IMR-90 (cell line): ENCODE measurements at regions of chr3 and their contacts with region 1.

Region 1: DNA sequence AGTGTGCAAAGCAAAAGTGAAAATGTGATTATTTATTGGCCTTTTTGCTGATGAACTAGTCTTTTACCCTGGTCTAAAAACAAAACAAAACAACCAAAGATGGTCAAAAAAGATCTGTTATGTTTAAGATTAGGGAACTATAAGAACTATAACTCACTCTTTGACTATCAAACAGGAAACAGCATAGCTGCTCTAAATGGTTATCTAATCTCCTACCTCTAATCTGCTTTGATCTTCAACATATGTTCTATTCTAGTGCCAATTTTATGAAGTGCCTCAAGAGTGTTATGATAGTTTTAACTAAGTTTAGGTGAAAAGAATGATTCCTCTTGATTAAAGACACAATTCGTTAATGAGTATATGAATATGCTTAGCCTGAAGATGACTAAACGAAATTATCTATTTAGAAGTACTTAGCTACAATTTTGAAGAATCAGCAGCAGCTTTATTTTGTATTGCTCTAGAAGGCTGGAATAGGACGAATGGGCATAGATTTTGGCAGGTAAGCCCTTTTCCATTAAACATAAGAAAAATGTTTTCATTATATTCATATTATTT is 46.0 kb downstream of the SETD2 start:
- DNase-seq: no peak
- ATAC-seq: no peak
- H3K4me3 ChIP-seq: no peak overlapping the region
- H3K27ac ChIP-seq: no peak overlapping the region
- H3K4me1 ChIP-seq: peaks cover 10% of the 10 kb centered on the region; the same call in 1 of the 2 replicates
- H3K27me3 ChIP-seq: no peaks in the 10 kb centered on the region
- CTCF ChIP-seq: no peak
- POLR2A ChIP-seq: no peak
- RAD21 ChIP-seq: no peak

Region 2: DNA sequence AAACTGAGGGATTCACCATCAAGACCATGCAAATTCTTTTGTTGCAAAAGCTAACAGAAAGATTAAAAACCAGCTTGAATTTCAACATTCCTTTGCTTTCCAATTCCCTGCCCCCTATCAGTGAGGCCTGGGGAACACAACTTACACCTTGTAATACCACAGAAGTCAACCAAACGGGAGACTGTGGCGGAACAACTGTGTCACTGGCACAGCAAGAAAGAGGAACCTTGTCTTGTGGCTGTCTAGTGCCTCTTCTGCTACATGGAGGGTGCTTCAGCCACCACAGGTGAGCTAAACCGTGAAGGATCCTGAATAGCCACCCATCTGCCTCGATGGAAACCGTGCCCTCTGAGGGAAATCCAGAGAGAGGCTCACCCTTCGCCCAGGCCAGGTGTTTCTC is 152.7 kb before region 1 on chr3:
- CTCF ChIA-PET with region 1: no interaction called
- POLR2A ChIA-PET with region 1: no interaction called
- dilution Hi-C with region 1: no loop called
- in situ Hi-C with region 1: no loop called
- intact Hi-C with region 1: no loop called
- DNase-seq: no peak
- ATAC-seq: no peak; the same call in 1 of the 2 replicates
- H3K4me3 ChIP-seq: no peak overlapping the region
- H3K27ac ChIP-seq: no peak overlapping the region
- H3K4me1 ChIP-seq: peaks cover 19% of the 10 kb centered on the region; the same call in 1 of the 2 replicates
- H3K27me3 ChIP-seq: no peaks in the 10 kb centered on the region
- CTCF ChIP-seq: no peak
- POLR2A ChIP-seq: no peak
- RAD21 ChIP-seq: no peak

Region 3: GRCh38 chr3:47156396-47156795 is 38.5 kb after region 1 on chr3:
- CTCF ChIA-PET with region 1: no interaction called
- POLR2A ChIA-PET with region 1: no interaction called
- dilution Hi-C with region 1: no loop called
- in situ Hi-C with region 1: no loop called
- intact Hi-C with region 1: loop called (anchors 5 kb)
- DNase-seq: no peak
- ATAC-seq: peak; percentile 37; the same call in 1 of the 2 replicates
- H3K4me3 ChIP-seq: no peak overlapping the region
- H3K27ac ChIP-seq: no peak overlapping the region
- H3K4me1 ChIP-seq: peaks cover 3% of the 10 kb centered on the region; the same call in 1 of the 2 replicates
- H3K27me3 ChIP-seq: no peaks in the 10 kb centered on the region
- CTCF ChIP-seq: no peak
- POLR2A ChIP-seq: no peak
- RAD21 ChIP-seq: no peak